Activated T-helper 1 cell treated with anti-CD3 and anti-CD28 coated beads, Interleukin-12 subunit alpha, Interleukin-12 subunit beta, Interleukin-2, Interleukin-4 antibody, amounts not matched to agents 30 ng/mL and 10 ng/mL and 1 ng/mL, durations not matched to agents 14 hours and 24 hours and 36 hours (primary cell): ENCODE measurements at regions of chr17 and their contacts with region 1.

Region 1: DNA sequence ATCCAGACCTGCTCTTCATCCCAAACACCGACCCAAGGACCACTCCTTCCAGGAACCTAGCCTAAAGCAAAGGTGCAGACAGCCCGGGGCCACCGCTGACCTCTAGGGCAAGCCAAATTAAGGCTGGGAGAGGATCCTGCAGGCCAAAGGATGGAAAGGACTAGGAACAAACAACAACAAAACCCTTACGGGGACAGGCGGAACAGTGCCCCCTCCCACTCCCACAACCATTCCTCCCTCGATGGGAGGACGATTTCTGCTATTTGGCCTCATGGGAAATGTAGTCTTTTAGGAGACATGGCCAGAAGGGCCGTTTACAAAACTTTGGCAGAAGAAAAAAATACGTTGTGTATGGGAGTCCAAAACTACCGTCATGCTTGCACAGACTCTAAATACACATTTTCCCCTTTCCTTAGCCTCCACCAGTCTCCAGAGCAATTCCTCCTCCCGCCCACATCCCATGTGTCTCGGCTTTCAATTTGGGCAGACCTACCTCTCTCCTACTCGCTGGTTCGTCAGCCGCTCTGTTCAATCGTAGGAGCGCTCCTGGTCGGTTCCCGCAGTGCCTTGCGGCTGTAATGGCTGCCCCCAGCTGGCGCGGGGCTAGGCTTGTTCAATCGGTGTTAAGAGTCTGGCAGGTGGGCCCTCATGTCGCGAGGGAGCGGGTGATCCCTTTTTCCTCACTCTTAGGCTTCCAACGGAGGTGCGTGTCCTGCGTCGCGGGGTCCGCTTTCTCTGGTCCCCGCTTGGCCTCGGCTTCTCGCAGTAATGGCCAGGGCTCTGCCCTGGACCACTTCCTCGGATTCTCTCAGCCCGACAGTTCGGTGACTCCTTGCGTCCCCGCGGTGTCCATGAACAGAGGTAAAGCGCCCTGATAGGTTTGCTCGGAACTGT is at the start of gene ERAL1:
- DNase-seq: peak; percentile 82
- H3K4me3 Mint-ChIP-seq: peak within 1 kb of the TSS; percentile 85
- H3K27ac Mint-ChIP-seq: peak within 1 kb of the TSS; percentile 88
- H3K4me1 Mint-ChIP-seq: peaks cover 14% of the 10 kb centered on the region
- H3K27me3 Mint-ChIP-seq: no peaks in the 10 kb centered on the region
- total RNA-seq, gene ERAL1: 60.4 and 61.5 TPM in 2 replicates

Region 2: GRCh38 chr17:28842282-28843012 is 12.3 kb before region 1 on chr17 and contains the start of gene FAM222B:
- intact Hi-C with region 1: loop called (anchors 1 kb)
- DNase-seq: peak; percentile 85
- H3K4me3 Mint-ChIP-seq: peak within 1 kb of the TSS; percentile 97
- H3K27ac Mint-ChIP-seq: peak within 1 kb of the TSS; percentile 95
- H3K4me1 Mint-ChIP-seq: peaks cover 24% of the 10 kb centered on the region
- H3K27me3 Mint-ChIP-seq: no peaks in the 10 kb centered on the region
- total RNA-seq, gene FAM222B: 27.5 and 28.1 TPM in 2 replicates

Region 3: GRCh38 chr17:28902819-28903545 is 48.3 kb after region 1 on chr17 and contains the start of gene DHRS13:
- intact Hi-C with region 1: loop called (anchors 1 kb)
- DNase-seq: peak; percentile 93
- H3K4me3 Mint-ChIP-seq: peak within 1 kb of the TSS; percentile 91
- H3K27ac Mint-ChIP-seq: peak within 1 kb of the TSS; percentile 79
- H3K4me1 Mint-ChIP-seq: peaks cover 39% of the 10 kb centered on the region
- H3K27me3 Mint-ChIP-seq: no peaks in the 10 kb centered on the region
- total RNA-seq, gene DHRS13: 34.6 and 34.9 TPM in 2 replicates